ENCODE measurements at regions of chr4 and their contacts with region 1.

Region 1: DNA sequence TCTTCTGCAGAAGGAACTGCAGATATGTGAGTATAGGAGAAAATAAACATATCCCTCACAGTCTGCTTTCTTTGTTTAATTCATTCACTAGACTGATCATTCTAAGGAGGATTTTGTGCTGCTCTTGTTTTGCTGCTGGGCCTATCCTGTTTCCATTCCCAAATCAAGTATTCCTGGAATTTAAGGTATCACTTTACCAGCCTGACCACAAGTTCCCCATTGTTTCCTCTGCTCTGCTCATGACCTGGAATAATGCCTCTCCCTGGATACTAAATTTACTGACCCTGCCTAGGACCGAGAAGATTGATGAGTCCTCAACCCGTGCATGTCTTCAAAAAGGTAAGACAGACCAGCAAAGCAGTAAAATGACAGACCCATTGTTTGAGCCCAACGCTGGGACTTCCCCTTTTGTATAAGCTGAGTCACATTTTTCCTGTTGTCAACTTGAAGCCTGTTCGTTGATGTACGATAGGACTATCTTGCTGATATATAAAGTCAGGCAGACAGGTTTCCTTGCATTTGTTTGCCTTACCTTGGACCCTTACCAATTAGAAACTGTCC is 85.5 kb upstream of the TET2 start:
- DNase-seq: peak; percentile 18
- H3K4me3 Mint-ChIP-seq: peak overlapping the region; percentile 51
- H3K27ac Mint-ChIP-seq: peak overlapping the region; percentile 80
- H3K4me1 Mint-ChIP-seq: peaks cover 44% of the 10 kb centered on the region
- H3K27me3 Mint-ChIP-seq: peaks cover 2% of the 10 kb centered on the region

Region 2: DNA sequence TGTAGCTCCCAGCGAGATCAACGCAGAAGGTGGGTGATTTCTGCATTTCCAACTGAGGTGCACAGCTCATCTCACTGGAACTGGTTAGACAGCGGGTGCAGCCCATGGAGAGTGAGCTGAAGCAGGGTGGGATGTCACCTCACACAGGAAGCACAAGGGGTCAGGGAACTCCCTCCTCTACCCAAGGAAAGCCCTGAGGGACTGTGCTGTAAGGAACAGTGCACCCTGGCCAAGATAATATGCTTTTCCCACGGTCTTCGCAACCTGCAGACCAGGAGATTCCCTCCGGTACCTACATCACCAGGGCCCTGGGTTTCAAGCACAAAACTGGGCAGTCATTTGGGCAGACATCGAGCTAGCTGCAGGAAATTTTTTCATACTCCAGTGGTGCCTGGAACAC is 130.9 kb before region 1 on chr4:
- intact Hi-C with region 1: loop called (anchors 10 kb)
- DNase-seq: no peak
- H3K4me3 Mint-ChIP-seq: no peak overlapping the region
- H3K27ac Mint-ChIP-seq: no peak overlapping the region
- H3K4me1 Mint-ChIP-seq: peaks cover 28% of the 10 kb centered on the region
- H3K27me3 Mint-ChIP-seq: peaks cover 15% of the 10 kb centered on the region

Region 3: GRCh38 chr4:104983615-104984179 is 77.5 kb before region 1 on chr4:
- intact Hi-C with region 1: no loop called
- DNase-seq: no peak
- H3K4me3 Mint-ChIP-seq: no peak overlapping the region
- H3K27ac Mint-ChIP-seq: no peak overlapping the region
- H3K4me1 Mint-ChIP-seq: peaks cover 6% of the 10 kb centered on the region
- H3K27me3 Mint-ChIP-seq: peaks cover 9% of the 10 kb centered on the region

Region 4: DNA sequence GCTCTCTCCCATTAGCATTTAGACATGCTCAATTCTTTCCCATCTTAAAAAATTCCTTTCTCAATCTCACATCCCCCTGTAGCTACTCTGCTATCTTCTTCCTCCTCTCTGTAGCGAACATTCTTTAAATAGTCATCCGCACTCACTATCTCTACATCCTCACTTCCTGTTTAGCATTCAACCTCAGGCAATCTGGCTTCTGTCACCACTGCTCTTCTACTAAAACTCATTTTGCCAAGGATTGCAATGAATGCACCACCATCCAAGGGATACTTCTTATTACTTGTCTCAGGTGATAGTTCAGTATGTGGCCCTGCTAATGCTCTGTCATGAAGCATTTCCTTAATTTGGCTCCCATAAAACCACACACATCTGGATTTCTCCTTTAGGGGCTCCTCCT is 74.6 kb after region 1 on chr4:
- intact Hi-C with region 1: loop called (anchors 2 kb)
- DNase-seq: no peak
- H3K4me3 Mint-ChIP-seq: no peak overlapping the region
- H3K27ac Mint-ChIP-seq: no peak overlapping the region
- H3K4me1 Mint-ChIP-seq: peaks cover 12% of the 10 kb centered on the region
- H3K27me3 Mint-ChIP-seq: no peaks in the 10 kb centered on the region

Region 5: GRCh38 chr4:105215609-105216313 is 154.5 kb after region 1 on chr4:
- intact Hi-C with region 1: loop called (anchors 1 kb)
- DNase-seq: no peak
- H3K4me3 Mint-ChIP-seq: no peak overlapping the region
- H3K27ac Mint-ChIP-seq: peak overlapping the region; percentile 63
- H3K4me1 Mint-ChIP-seq: peaks cover 25% of the 10 kb centered on the region
- H3K27me3 Mint-ChIP-seq: no peaks in the 10 kb centered on the region

Region 6: GRCh38 chr4:105453550-105454205 is 392.5 kb after region 1 on chr4:
- intact Hi-C with region 1: loop called (anchors 5 kb)
- DNase-seq: no peak
- H3K4me3 Mint-ChIP-seq: no peak overlapping the region
- H3K27ac Mint-ChIP-seq: peak overlapping the region; percentile 57
- H3K4me1 Mint-ChIP-seq: peaks cover 22% of the 10 kb centered on the region
- H3K27me3 Mint-ChIP-seq: no peaks in the 10 kb centered on the region

Region 7: GRCh38 chr4:105594099-105594993 is 533.1 kb after region 1 on chr4:
- intact Hi-C with region 1: loop called (anchors 2 kb)
- DNase-seq: no peak
- H3K4me3 Mint-ChIP-seq: no peak overlapping the region
- H3K27ac Mint-ChIP-seq: peak overlapping the region; percentile 40
- H3K4me1 Mint-ChIP-seq: peaks cover 8% of the 10 kb centered on the region
- H3K27me3 Mint-ChIP-seq: peaks cover 14% of the 10 kb centered on the region